Posterior cingulate gyrus (tissue), 11 donors: ENCODE measurements at regions of chr2 and their contacts with region 1.

Region 1: DNA sequence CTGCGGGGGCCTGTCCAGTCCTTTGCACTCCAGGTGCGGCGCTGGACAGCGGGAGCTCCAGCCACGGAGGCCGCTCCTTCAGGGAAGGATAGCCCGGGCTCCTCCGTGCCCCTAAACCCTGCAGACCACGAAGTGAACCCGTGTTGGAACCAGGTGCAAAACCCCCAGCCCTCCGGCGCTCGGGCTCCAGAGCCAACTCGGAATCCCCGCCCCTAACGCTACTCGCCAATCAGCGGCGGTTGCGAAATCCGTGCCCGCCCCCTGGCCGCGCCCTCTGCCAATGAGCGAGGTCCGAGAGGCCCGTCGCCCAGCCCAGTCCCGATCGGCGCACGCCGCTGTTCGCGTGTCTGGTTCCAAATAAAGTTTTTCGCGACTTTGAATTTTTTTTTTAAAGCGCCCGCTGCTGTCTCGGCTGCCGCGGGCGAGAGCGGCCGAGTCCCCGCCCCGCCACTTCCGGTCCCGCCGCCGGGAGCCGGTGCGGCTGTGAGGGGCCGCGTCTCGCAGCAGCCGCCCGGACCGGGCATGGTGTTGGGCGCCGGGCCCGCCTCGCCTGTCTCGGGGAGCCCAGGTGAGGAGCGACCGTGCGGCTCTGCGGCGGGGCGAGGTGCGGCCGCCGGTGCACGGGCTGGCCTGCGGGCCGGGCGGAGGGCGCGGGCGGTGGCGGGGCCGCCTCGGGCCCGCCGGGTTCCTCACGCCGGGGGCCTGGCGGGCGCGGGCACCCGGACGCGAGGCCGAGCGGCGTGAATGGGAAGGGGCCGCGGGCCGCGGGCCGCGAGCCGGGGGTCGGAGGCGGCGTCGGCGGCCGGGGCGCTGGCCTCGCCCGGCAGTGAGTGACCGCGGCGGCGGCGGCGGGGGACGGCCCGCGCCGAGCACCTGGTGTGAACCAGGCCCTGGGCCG is at the start of gene UBE2F:
- DNase-seq: peak; percentile 96 to 100 (median 98)

Region 2: DNA sequence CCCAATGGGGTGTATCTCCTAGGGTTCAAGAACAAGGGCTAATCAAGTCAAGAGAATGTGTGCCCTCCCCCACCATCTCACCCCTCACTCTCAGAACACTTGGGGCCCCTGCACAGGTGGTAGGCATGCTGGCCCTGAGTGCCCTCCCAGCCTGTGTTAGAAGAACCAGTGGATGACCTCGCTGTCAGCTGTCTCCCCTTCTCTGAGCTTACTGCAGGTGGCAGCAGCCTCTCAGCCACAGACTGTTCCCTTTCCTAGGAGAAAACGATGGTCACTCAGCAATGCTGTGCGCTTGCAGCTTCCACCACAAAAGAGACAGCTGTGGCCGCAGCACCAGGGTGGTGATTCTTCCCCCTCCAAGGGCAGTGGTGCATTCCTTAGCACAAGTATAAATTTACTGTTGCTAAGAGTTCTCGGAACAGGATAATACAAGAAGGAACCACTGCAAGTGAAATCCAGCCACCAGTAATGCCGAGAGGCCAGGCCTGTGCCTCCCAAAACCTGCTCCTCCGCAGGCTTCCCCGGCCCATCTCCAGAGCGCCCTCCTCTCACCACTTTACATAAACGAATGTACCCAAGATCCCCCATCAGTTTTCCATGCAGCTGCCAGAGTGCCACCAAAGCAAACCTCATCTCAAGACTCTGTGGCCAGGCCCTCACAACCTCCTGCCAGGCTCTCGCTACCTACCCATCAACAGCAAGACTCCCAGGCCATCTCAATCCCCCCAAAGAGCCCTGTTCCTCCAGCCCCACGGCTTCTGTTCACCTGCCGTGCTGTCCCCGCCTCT is 108.3 kb before region 1 on chr2:
- intact Hi-C with region 1: loop called (anchors 5 kb)
- DNase-seq: peak; percentile 67 to 96 (median 82)

Region 3: DNA sequence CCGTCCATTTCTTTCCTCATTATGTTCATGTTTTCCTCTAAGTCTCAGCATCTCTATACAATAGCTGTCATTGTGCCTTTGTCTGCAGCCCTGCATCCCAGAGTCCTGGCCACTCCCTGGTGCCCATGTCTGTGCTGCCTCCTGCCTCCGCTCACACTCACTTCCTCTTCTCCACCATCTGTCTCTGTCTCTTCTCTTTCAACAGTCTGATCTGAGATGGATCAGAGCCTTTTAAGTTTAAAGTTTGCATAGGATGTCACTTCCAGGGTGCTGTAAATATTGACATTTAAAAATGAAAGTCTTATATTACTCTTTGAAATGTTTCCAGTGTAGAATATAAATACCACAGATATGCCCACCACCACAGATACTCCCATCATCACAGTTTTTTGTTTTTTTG is 42.7 kb after region 1 on chr2:
- intact Hi-C with region 1: loop called (anchors 5 kb)
- DNase-seq: peak in 9 of 10 donors; percentile 17 to 94 (median 48)

Region 4: GRCh38 chr2:238060542-238061314 is 93.9 kb after region 1 on chr2 and contains the start of gene SCLY:
- intact Hi-C with region 1: loop called (anchors 2 kb)
- DNase-seq: peak; percentile 97 to 100 (median 98)

Region 5: GRCh38 chr2:238203094-238203972 is 236.5 kb after region 1 on chr2 and contains the start of gene ILKAP:
- intact Hi-C with region 1: loop called (anchors 5 kb)
- DNase-seq: peak; percentile 73 to 98 (median 86)

Region 6: DNA sequence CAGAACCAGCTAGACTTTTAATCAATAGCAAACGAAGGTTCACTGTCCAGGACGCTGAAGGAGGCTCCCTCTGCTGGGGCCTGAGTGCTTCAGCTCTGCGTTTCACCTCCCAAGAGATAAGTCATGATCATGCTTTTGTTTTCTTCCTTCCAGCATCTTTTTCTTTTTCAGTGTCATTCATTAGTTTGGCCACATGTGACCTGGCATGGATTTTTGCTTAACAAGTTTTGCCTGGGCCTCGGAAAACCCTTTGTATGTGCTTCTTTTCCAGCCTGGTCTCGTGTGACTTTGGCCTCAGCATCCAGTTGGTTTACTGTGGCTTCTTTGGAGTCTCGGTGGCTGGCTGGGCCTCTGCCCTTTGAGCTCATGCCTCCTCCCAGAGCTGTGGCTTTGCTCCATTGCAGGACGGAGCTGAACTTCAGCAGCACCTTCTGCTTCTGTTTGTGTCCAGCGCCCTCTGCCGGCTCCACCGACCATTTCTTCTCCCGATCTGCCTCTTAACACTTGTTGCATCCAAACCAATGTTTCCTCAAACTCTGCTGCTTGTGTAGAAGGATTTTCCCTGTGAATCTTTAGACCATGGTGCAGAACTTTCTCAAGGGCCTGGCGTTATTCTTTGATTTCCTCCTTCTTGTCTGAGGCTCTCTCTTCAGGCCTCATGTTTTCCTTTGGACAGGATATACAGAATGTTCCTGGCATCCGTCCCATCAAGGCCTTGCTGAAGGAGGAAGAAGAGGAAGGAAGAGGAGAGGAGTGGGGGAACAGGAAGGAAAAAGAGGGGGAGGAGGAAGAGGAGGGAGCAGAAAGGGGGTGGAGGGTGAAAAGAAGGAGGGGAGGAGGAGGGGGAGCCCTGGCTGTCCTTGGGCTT is 296.6 kb after region 1 on chr2:
- intact Hi-C with region 1: loop called (anchors 10 kb)
- DNase-seq: peak; percentile 84 to 99 (median 94)